ENCODE measurements at regions of chr19 and their contacts with region 1.

Region 1: DNA sequence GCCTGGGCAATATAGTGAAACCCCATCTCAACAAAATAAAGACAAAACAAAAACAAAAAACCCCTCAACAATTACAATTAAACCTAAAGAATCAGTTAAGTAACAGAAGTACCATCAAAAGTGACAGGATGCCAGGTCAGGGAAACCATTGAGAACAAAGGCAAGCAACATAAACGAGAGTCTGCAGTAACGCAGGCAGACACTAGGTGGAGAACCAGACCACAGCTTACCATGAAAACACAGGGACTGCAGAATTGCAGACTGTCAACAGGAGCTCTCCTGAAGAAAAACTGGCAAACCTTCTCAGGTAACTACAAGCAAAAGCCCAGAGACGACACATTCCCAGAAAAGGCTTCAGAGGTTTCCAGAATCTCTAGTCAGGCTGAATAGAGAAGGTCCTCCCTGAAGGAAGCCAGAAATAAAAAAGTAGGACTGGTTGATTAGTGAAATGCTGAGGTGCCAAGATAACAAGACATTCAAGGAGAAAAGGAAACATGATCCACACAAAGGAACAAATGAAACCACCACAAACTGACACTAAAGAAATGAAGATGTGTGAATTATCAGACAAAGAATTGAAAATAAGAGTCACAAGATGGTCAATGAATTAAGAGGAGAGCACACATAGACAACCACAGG is 2.2 kb upstream of the ZNF665 start:
- DNase-seq: peak; percentile 21 to 89
- H3K4me3 ChIP-seq: no peak overlapping the region
- H3K27ac ChIP-seq: no peak overlapping the region
- H3K4me1 ChIP-seq: peaks cover 0 to 4% of the 10 kb centered on the region in 2 donors
- H3K27me3 ChIP-seq: no peaks in the 10 kb centered on the region
- CTCF ChIP-seq: peak; percentile 71 to 91 (median 90)

Region 2: DNA sequence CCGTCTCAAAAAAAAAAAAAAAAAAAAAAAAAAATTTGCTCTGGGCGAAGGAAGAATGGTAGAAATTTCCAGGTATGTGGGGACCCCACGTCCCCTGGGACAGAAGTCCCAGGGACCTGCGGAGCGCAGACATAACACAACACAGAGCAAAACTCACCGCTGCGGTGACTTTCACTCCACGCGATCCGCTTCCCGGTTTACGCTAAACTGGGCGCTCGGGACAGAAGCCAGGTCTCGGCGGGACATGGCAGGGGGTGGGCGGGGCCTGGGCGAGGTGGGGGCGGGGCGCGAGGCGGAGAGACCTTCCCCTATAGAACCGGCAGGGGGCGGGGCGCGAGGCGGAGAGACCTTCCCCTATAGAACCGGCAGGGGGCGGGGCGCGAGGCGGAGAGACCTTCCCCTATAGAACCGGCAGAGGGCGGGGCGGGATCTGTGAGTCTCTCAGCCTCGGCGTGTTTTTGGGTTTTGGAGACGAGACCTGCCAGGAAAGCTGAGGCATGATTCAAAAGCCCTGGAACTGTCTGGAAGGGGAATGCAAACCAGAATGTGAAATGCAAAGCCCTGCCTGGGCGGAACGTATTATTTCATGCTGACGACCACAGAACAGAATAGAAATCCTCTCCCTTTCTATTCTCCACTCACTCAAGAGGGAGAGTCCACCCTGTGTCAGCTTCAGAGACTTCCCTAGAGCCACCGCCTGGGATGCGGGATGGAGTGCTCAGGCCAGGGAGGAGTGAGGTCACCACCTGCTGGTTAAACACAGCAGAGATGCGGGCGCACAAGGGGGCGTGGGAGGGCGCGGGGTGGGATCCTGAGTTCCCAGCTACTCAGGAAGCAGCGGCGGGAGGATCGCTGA is 201.8 kb before region 1 on chr19:
- intact Hi-C with region 1: loop called (anchors 5 kb)
- DNase-seq: peak; percentile 51 to 91
- H3K4me3 ChIP-seq: peak overlapping the region; percentile 61 to 71
- H3K27ac ChIP-seq: peak overlapping the region; percentile 79 to 81
- H3K4me1 ChIP-seq: peaks cover 8 to 10% of the 10 kb centered on the region in 2 donors
- H3K27me3 ChIP-seq: no peaks in the 10 kb centered on the region
- CTCF ChIP-seq: peak; percentile 38 to 77 (median 61)

Region 3: DNA sequence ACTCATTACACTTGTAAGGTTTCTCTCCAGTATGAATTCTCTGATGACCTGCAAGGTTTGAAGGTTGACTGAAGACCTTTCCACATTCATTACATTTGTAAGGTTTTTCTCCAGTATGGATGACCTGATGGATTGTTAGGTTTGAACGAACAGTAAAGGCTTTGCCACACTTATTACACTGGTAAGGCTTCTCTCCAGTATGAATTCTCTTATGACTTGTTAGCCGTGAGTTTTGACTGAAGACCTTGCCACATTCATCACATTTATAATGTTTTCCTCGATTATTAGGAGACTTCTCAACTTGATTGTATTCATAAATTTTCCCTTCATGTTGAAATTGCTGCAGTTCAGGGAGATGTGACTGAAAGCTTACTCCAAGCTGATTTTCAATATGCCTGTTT is 29.7 kb before region 1 on chr19:
- intact Hi-C with region 1: no loop called
- DNase-seq: no peak
- H3K4me3 ChIP-seq: no peak overlapping the region
- H3K27ac ChIP-seq: no peak overlapping the region
- H3K4me1 ChIP-seq: no peaks in the 10 kb centered on the region
- H3K27me3 ChIP-seq: no peaks in the 10 kb centered on the region
- CTCF ChIP-seq: no peak

Region 4: GRCh38 chr19:53333463-53334449 is 138.4 kb after region 1 on chr19 and contains the start of gene ZNF845:
- intact Hi-C with region 1: loop called (anchors 1 kb)
- DNase-seq: peak; percentile 75 to 98
- H3K4me3 ChIP-seq: peak within 1 kb of the TSS; percentile 66 to 73
- H3K27ac ChIP-seq: peak within 1 kb of the TSS; percentile 77 to 82
- H3K4me1 ChIP-seq: peaks cover 0 to 4% of the 10 kb centered on the region in 2 donors
- H3K27me3 ChIP-seq: no peaks in the 10 kb centered on the region
- CTCF ChIP-seq: no peak
- total RNA-seq, gene ZNF845: 3.1 TPM

Region 5: GRCh38 chr19:53431399-53432087 is 236.2 kb after region 1 on chr19 and contains the start of gene ZNF761:
- intact Hi-C with region 1: loop called (anchors 10 kb)
- DNase-seq: peak; percentile 73 to 97
- H3K4me3 ChIP-seq: peak within 1 kb of the TSS; percentile 66 to 96
- H3K27ac ChIP-seq: peak within 1 kb of the TSS; percentile 67 to 77
- H3K4me1 ChIP-seq: no peaks in the 10 kb centered on the region
- H3K27me3 ChIP-seq: no peaks in the 10 kb centered on the region
- CTCF ChIP-seq: peak in 2 of 3 experiments; percentile 34 to 50
- total RNA-seq, gene ZNF761: 1.4 TPM

Region 6: GRCh38 chr19:53792721-53793433 is 597.5 kb after region 1 on chr19:
- intact Hi-C with region 1: loop called (anchors 5 kb)
- DNase-seq: peak; percentile 43 to 90
- H3K4me3 ChIP-seq: no peak overlapping the region
- H3K27ac ChIP-seq: no peak overlapping the region
- H3K4me1 ChIP-seq: no peaks in the 10 kb centered on the region
- H3K27me3 ChIP-seq: no peaks in the 10 kb centered on the region
- CTCF ChIP-seq: peak; percentile 84 to 97 (median 90)

Region 7: DNA sequence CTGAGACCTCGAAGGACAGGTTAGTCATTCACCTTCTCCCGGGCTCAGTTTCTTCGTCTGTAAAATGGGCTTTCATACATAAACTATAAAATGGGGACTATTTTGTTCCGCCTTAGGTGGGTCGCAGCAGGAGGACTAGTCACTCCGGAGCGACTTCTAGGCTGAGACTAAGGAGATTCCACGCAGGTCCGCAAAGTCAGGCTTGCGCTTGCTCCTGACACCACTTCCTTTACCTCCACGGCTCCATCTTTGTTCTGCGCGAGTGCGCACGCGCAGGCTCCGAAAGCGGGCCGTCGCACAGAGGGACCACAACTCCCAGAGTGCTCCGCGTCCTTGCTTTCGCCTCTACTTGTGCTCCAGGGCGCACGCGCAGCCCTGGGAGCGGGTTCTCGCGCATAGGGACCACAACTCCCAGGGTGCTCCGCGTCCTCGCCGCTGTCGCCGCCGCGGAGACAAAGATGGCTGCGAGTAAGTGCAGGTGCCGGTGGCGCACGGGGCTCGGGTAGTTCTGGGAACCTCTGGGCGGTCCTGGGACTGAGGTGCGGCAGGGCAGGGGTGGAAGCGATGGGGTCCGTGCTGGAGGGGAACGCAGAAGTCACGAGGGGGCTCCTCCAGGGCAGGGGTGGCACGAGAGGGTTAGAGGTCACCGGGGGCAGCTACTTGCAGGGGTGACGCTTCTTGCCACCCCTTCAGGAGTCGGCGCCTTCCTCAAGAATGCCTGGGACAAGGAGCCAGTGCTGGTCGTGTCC is 907.2 kb after region 1 on chr19 and contains the start of gene NDUFA3:
- intact Hi-C with region 1: loop called (anchors 5 kb)
- DNase-seq: peak; percentile 97 to 99
- H3K4me3 ChIP-seq: peak within 1 kb of the TSS; percentile 72 to 83
- H3K27ac ChIP-seq: peak within 1 kb of the TSS in 1 of 2 donors; percentile 67
- H3K4me1 ChIP-seq: peaks cover 0 to 7% of the 10 kb centered on the region in 2 donors
- H3K27me3 ChIP-seq: no peaks in the 10 kb centered on the region
- CTCF ChIP-seq: no peak
- total RNA-seq, gene NDUFA3: 12.5 TPM